ENCODE measurements at regions of chr5 and their contacts with region 1.

Region 1: DNA sequence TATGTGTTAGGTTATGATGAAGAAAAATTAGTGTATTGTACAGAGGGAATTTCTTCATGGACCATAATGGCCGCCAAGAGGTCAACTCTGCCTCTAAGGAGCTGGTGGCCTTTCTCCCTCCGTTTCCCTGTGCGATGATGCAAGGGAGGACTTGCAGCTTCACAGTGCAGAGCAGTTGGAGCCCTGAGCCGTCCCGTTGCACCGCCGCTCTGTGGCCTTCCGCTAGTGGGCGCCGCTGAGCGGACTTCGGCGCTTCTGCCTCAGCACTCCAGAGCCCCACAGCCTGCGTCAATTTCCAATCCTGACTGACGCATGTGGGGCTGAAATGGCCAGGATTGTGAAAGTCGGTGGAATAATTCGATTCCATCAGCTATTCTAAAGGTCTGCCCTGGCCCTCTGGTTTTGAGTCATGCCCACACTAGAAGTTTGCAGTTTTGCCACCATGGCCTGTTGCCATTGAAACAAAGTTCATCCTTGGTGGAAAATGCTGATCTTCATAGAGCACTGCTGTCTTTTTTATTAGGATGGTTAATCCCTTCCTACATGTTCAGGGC is 22.7 kb upstream of the LECT2 start:
- H3K4me3 Mint-ChIP-seq: peak overlapping the region; percentile 13
- H3K27ac Mint-ChIP-seq: peak overlapping the region; percentile 51
- H3K4me1 Mint-ChIP-seq: peaks cover 20% of the 10 kb centered on the region
- H3K27me3 Mint-ChIP-seq: peaks cover 36% of the 10 kb centered on the region

Region 2: DNA sequence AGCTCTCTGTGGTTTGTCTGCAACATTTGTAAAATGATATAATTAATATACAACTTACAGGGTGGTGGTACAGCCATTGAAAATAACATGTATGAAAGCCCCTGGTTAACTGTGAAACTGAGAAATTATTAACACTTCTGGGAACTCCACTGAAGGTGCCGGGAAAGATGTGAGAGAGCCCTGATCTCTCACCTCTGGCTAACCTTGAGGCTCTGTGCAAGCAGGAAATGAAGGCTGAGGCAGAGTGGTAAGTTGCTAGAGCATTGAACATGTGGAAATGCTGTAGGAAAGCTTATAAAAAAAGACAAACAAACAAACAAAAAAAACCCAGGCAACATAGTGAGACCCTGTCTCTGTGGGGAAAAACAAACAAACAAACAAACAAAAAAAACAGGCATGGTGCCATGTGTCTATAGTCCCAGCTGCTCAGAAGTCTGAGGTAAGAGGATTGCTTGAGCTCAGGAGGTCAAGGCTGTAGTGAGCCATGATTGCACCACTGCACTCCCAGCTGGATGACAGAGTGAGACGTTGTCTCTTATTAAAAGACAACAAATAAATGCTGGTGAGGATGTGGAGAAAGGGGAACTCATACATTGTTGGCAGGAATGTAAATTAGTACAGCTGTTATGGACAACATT is 1002.3 kb before region 1 on chr5:
- intact Hi-C with region 1: no loop called
- H3K4me3 Mint-ChIP-seq: no peak overlapping the region
- H3K27ac Mint-ChIP-seq: no peak overlapping the region
- H3K4me1 Mint-ChIP-seq: no peaks in the 10 kb centered on the region
- H3K27me3 Mint-ChIP-seq: no peaks in the 10 kb centered on the region

Region 3: GRCh38 chr5:136028782-136029742 is 51.6 kb after region 1 on chr5 and contains the start of gene TGFBI:
- intact Hi-C with region 1: loop called (anchors 2 kb)
- H3K4me3 Mint-ChIP-seq: peak within 1 kb of the TSS; percentile 91
- H3K27ac Mint-ChIP-seq: peak within 1 kb of the TSS; percentile 94
- H3K4me1 Mint-ChIP-seq: peaks cover 69% of the 10 kb centered on the region
- H3K27me3 Mint-ChIP-seq: peaks cover 3% of the 10 kb centered on the region

Region 4: GRCh38 chr5:136053336-136054141 is 76.1 kb after region 1 on chr5:
- intact Hi-C with region 1: loop called (anchors 5 kb)
- H3K4me3 Mint-ChIP-seq: no peak overlapping the region
- H3K27ac Mint-ChIP-seq: peak overlapping the region; percentile 81
- H3K4me1 Mint-ChIP-seq: peaks cover 73% of the 10 kb centered on the region
- H3K27me3 Mint-ChIP-seq: no peaks in the 10 kb centered on the region